ENCODE measurements at regions of chr4 and their contacts with region 1.

Region 1: DNA sequence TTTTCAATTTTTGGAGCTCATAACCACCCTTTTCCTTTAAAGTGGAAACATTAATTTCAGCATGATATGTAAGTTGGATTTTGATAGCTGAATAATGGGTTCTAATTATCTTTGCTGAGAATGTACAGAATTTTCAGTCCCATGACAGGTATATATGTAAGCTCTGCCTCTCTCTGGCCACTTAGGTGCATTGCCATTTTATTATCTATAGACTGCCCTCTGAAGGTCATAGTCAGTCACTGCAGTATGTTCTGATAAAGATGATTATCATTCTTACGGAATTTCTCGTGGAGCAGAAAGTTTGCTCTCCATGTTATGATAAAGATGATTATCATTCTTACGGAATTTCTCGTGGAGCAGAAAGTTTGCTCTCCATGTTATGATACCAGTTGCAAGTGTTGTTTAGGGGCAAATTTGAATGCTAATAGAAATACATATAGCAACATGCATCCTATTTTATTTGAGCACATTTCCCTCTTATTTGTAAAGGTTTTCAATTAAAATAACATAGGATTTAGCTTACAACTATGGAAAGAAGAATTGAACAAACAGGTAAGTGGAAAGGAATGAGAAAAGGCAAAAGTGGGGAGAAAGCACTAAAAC is 10.4 kb downstream of the AFP start:
- DNase-seq: no peak
- H3K4me3 Mint-ChIP-seq: no peak overlapping the region
- H3K27ac Mint-ChIP-seq: no peak overlapping the region
- H3K4me1 Mint-ChIP-seq: no peaks in the 10 kb centered on the region
- H3K27me3 Mint-ChIP-seq: no peaks in the 10 kb centered on the region

Region 2: DNA sequence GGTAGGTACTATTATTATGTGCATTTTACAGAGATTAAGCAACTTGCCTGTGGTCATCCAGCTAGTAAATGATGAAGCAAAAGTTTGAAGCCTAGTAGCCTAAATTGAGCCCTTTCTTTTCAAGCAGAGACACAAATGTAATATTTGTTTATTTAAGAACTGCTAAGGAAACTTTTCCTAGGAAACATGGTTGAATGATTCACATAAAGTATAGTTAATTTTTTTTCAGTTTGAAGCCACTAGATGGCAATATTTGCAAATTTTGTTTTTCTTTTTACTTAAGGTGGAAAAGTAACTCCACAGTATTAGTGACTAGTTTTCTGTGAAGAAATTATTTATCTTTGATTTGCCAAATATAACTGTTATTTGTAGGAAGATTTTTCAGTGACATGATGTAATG is 135.0 kb before region 1 on chr4:
- CTCF ChIA-PET with region 1: interaction called, 17 read pairs
- DNase-seq: no peak
- H3K4me3 Mint-ChIP-seq: no peak overlapping the region
- H3K27ac Mint-ChIP-seq: no peak overlapping the region
- H3K4me1 Mint-ChIP-seq: no peaks in the 10 kb centered on the region
- H3K27me3 Mint-ChIP-seq: no peaks in the 10 kb centered on the region

Region 3: GRCh38 chr4:73406548-73406875 is 39.9 kb before region 1 on chr4:
- CTCF ChIA-PET with region 1: no interaction called
- DNase-seq: no peak
- H3K4me3 Mint-ChIP-seq: no peak overlapping the region
- H3K27ac Mint-ChIP-seq: no peak overlapping the region
- H3K4me1 Mint-ChIP-seq: no peaks in the 10 kb centered on the region
- H3K27me3 Mint-ChIP-seq: no peaks in the 10 kb centered on the region

Measured in activated naive CD4-positive, alpha-beta T cell treated with anti-CD3 and anti-CD28 coated beads, Interleukin-2, amount 10 ng/mL, durations not matched to agents 7 days and 5 days (primary cell).